ENCODE measurements at regions of chr7 and their contacts with region 1.

Region 1: GRCh38 chr7:92447345-92448204 is at the start of gene GATAD1:
- DNase-seq: peak; percentile 92 to 94
- ATAC-seq: peak; percentile 97 to 98
- H3K4me3 ChIP-seq: peak within 1 kb of the TSS; percentile 89
- H3K27ac ChIP-seq: peak within 1 kb of the TSS; percentile 98 to 100
- H3K4me1 ChIP-seq: peaks cover 15% of the 10 kb centered on the region
- CTCF ChIP-seq: no peak
- EP300 ChIP-seq: no peak
- POLR2A ChIP-seq: peak; percentile 76
- RAD21 ChIP-seq: no peak; a peak in 1 of 5 replicates
- polyA plus RNA-seq, gene GATAD1: 35.7 and 38.5 TPM in 2 replicates

Region 2: DNA sequence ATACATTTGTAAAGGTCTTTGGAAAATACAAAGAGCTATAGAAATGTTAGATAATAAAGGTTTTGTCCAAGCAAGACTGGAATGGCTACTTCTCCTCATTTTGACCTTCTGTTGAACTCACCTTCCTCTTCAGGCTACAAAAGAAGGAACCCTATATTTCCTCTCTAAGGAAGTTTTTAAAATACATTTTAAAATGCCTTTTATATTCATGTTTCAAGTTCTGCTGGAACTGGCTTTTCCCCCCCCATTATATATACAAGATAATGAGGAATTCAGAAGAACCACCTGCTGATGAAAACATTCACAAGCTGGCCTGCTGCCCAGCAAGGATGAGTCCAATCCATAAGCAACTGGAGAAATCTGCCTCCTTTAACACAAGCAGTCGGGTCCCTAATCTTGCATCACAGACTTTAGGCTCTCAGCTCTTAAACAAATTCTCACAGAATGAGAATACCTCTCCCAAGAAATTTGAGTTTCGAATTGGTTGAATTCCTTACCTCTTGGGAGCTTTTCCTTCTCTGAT is 611.7 kb before region 1 on chr7:
- CTCF ChIA-PET with region 1: interaction called, 13 read pairs
- POLR2A ChIA-PET with region 1: no interaction called
- DNase-seq: no peak
- ATAC-seq: no peak
- H3K4me3 ChIP-seq: no peak overlapping the region
- H3K27ac ChIP-seq: no peak overlapping the region
- H3K4me1 ChIP-seq: no peaks in the 10 kb centered on the region
- CTCF ChIP-seq: no peak
- EP300 ChIP-seq: no peak
- POLR2A ChIP-seq: no peak
- RAD21 ChIP-seq: no peak

Region 3: DNA sequence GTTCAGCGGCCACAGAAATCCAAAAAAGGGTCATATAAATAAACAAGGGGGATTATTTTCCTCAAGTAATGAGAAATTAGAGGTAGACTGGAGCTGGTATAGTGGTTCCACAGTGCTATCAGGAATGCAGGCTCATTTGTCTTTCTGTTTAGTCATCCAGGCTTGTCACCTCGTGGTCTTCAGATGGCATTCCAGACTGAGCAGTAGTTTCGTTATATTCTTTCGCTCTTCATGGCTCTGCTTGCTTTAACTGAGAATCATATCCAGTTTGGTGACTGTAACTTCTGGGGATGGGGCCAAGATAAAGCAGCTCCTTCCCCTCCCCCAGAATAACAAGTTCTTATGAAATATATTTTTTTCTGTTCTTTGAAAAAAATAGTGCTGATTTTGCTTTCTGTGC is 192.3 kb before region 1 on chr7:
- CTCF ChIA-PET with region 1: no interaction called
- POLR2A ChIA-PET with region 1: no interaction called
- DNase-seq: no peak
- ATAC-seq: no peak
- H3K4me3 ChIP-seq: no peak overlapping the region
- H3K27ac ChIP-seq: no peak overlapping the region
- H3K4me1 ChIP-seq: peaks cover 8% of the 10 kb centered on the region
- CTCF ChIP-seq: no peak
- EP300 ChIP-seq: no peak
- POLR2A ChIP-seq: no peak
- RAD21 ChIP-seq: no peak

Region 4: DNA sequence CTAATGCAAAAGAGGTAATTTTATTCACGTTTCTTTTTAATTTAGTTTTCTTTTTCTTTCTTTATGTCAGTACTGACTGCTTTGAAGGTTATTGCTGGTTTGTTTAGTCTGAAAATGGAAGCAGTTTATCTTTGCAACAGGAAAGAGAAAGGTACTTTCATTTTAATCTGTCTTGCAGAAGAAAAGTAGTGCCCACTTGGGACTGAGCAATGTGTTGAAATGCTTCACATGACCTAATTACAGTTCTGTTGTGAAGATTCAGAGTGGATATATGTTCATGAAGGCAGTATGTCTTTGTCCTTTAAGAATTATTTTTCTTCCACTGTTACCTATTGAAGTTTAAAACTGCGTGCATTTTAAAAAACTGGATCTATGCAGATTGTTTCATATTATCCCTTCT is 121.7 kb before region 1 on chr7:
- CTCF ChIA-PET with region 1: no interaction called
- POLR2A ChIA-PET with region 1: no interaction called
- DNase-seq: no peak
- ATAC-seq: no peak
- H3K4me3 ChIP-seq: no peak overlapping the region
- H3K27ac ChIP-seq: no peak overlapping the region
- H3K4me1 ChIP-seq: no peaks in the 10 kb centered on the region
- CTCF ChIP-seq: no peak
- EP300 ChIP-seq: no peak
- POLR2A ChIP-seq: no peak
- RAD21 ChIP-seq: no peak

Region 5: DNA sequence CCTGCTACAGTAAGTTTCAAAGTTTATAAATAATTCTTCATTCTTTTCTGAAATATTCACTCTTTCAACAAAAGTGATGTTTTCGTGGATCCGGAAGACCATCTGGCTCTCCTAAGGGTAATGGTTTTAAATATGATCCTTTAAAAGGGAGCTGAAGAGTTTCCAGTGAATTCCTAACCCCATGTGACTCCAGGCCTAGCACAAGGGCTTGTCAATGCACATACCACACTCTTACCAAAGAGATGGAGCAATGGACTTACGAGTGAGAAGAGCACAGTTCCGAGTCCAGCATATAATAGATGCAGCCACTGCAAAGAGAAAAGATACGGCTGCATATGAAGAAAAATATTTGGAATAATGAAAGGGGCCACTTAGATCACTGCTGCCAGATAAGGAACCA is 32.4 kb before region 1 on chr7:
- CTCF ChIA-PET with region 1: interaction called, 10 read pairs
- POLR2A ChIA-PET with region 1: interaction called, 4 read pairs
- DNase-seq: no peak
- ATAC-seq: no peak
- H3K4me3 ChIP-seq: no peak overlapping the region
- H3K27ac ChIP-seq: no peak overlapping the region
- H3K4me1 ChIP-seq: no peaks in the 10 kb centered on the region
- CTCF ChIP-seq: no peak
- EP300 ChIP-seq: no peak
- POLR2A ChIP-seq: no peak
- RAD21 ChIP-seq: no peak

Region 6: GRCh38 chr7:92436612-92437445 is 10.7 kb before region 1 on chr7:
- CTCF ChIA-PET with region 1: interaction called, 17 read pairs
- POLR2A ChIA-PET with region 1: no interaction called
- DNase-seq: no peak
- ATAC-seq: no peak; a peak in 1 of 6 replicates
- H3K4me3 ChIP-seq: no peak overlapping the region
- H3K27ac ChIP-seq: no peak overlapping the region
- H3K4me1 ChIP-seq: no peaks in the 10 kb centered on the region
- CTCF ChIP-seq: no peak
- EP300 ChIP-seq: no peak
- POLR2A ChIP-seq: no peak
- RAD21 ChIP-seq: no peak

Region 7: DNA sequence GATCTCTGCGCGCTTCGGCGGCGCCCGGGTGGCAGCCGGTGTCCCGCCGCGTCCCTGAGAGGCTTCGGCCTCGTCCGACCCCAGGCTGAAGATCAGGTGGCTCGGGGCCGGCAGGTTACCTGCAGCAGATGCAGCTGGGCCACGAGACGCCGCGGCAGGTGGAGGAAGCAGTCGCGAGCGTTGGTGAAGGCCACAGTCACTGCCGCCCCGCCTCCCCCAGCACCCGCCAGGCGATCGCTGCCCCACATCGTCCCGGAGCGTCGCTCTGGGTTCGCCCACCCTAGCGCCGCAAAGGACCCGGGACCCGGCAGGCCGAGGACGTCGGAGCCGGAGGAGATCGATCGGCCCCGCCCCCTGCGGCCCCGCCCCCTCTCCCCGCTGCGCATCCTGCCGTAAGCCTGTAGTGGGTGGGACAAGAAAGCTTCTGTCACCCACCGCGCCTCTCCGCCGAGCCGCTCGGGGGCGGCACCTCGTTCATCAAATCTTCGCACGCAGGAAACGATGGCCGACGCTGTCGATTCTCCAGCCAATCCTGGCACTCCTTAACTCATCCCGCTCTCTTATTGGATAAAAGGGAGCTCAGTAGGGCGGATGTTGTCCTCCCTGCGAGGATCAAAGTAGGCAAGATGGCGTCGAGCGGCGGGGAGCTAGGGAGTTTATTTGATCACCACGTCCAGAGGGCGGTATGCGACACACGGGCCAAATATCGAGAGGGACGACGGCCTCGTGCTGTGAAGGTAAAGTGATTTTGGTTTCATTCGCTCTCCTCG is 80.8 kb after region 1 on chr7 and contains the starts of genes PEX1 and RBM48:
- CTCF ChIA-PET with region 1: interaction called, 3 read pairs
- POLR2A ChIA-PET with region 1: interaction called, 14 read pairs
- DNase-seq: peak; percentile 98 to 99
- ATAC-seq: peak; percentile 93 to 97
- H3K4me3 ChIP-seq: peak within 1 kb of the TSS; percentile 76
- H3K27ac ChIP-seq: peak within 1 kb of the TSS; percentile 72 to 88
- H3K4me1 ChIP-seq: peaks cover 16% of the 10 kb centered on the region; the same call in 2 of the 3 replicates
- CTCF ChIP-seq: peak; percentile 64
- EP300 ChIP-seq: no peak
- POLR2A ChIP-seq: peak; percentile 56
- RAD21 ChIP-seq: no peak
- polyA plus RNA-seq, gene PEX1: 22.7 and 23.2 TPM in 2 replicates
- polyA plus RNA-seq, gene RBM48: 6.5 and 7.0 TPM in 2 replicates

Measured in A549 (cell line).